ENCODE measurements at regions of chr12 and their contacts with region 1.

Region 1: DNA sequence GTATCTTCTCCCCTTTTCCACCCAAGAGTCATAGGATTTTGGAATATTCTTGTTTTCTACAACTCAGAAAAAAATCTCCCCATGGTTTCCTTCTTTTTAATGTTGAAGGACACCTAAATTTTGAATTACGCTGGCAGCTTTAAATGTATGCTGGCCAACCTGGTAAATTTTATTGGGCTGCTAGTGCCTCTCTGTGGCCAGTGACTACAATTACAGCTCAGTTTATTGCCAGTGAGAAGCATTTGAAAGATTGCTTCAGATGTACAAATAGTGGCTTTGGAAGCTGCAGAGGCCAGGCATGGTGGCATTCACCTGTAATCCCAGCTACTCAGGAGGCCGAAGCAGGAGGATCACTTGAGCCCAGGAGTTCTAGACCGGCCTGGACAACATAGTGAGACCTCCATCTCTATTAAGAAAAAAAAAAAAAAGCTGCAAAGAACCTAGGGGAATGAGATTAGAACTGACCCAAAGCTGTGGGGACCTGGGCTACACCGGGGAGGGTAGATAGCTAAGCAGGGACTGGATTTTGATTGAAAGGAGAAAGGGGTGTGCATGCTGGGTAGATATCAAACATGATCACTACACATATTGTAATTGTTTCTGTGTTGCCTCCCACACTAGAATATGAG is 7.6 kb upstream of the RAB21 start:
- DNase-seq: peak; percentile 12
- H3K4me3 Mint-ChIP-seq: no peak overlapping the region
- H3K27ac Mint-ChIP-seq: no peak overlapping the region
- H3K4me1 Mint-ChIP-seq: no peaks in the 10 kb centered on the region
- H3K27me3 Mint-ChIP-seq: peaks cover 36% of the 10 kb centered on the region

Region 2: DNA sequence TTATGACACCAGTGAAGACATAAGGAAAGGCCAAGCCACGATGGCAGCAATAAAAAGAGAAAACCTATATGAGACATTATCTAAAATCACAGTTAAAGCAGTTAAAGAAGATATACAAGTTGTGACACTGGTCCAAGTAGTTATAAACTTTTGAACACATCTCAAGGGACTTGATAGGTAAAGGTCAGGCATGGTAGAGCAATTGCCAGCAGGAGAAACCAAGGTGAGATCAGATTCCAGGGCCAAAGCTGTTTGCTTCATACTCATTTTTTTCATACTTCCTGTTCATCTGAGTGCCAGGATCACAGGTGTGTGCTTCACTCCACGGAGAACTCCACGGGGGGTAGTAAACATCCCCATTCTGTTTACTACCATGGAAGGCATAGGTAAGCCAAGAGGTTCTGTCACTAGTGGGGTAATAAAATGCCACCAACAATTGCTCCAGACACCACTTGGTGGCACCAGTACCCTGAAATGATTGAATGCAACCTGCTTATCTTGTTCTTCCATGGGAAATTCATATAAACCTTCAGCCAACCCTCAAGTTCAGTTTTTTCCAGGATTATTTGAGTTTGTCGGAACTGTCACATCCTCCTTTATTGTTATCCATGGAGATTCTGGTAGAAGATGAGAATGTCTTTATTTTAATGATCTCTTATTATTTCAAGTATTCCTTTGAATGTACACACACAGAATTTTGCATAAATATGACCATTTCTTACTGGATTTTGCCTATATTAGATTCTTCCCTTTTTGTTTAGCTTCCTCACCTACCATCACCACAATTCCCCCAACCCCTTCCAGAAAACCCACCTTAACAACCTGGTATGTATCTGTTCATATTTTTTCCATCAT is 530.1 kb before region 1 on chr12:
- intact Hi-C with region 1: loop called (anchors 2 kb)
- DNase-seq: no peak
- H3K4me3 Mint-ChIP-seq: no peak overlapping the region
- H3K27ac Mint-ChIP-seq: no peak overlapping the region
- H3K4me1 Mint-ChIP-seq: no peaks in the 10 kb centered on the region
- H3K27me3 Mint-ChIP-seq: no peaks in the 10 kb centered on the region

Region 3: GRCh38 chr12:71354871-71355270 is 392.2 kb before region 1 on chr12:
- intact Hi-C with region 1: no loop called
- DNase-seq: no peak
- H3K4me3 Mint-ChIP-seq: no peak overlapping the region
- H3K27ac Mint-ChIP-seq: no peak overlapping the region
- H3K4me1 Mint-ChIP-seq: no peaks in the 10 kb centered on the region
- H3K27me3 Mint-ChIP-seq: no peaks in the 10 kb centered on the region

Region 4: DNA sequence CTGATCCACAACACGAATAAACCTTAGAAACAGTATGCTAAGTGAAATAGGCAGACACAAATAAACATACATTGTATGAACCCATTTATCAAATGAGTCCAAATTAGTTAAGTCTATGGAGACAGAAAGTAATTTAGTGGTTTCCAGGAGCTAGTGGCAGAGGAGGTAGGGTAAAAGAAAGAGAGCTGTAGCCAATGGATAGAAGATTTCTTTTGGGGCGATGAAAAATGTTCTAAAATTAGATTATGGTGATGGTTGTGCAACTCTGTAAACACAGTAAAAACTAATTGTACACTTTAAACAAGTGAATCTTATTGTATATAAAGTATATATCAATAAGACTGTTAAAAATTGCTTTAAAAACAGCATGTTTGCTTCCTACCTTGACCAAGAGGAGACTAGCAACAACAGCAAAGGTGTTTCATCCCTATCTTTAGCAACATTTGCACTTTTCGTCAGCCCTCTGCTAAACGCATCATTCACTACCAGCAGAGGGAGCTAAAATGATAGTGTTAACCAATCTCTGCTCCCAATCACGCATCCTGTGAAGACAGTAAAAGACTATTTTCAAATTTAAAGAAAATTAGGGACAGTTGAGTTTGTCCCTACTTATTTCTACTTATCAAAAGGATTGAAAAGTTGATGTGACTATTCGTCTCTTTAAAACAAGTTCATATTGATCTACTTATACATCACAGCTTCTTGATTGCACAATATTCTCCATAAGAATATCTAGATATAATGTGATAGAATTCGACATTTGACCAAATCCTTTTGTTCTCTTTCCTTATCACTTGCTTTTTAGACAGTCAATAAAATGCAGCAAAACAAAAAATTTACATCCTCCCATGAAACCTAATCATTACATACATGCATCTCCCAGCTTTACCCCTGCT is 331.5 kb before region 1 on chr12:
- intact Hi-C with region 1: loop called (anchors 1 kb)
- DNase-seq: no peak
- H3K4me3 Mint-ChIP-seq: no peak overlapping the region
- H3K27ac Mint-ChIP-seq: no peak overlapping the region
- H3K4me1 Mint-ChIP-seq: no peaks in the 10 kb centered on the region
- H3K27me3 Mint-ChIP-seq: peaks cover 10% of the 10 kb centered on the region

Region 5: GRCh38 chr12:71469258-71470016 is 277.7 kb before region 1 on chr12:
- intact Hi-C with region 1: no loop called
- DNase-seq: no peak
- H3K4me3 Mint-ChIP-seq: no peak overlapping the region
- H3K27ac Mint-ChIP-seq: no peak overlapping the region
- H3K4me1 Mint-ChIP-seq: no peaks in the 10 kb centered on the region
- H3K27me3 Mint-ChIP-seq: peaks cover 3% of the 10 kb centered on the region

Region 6: DNA sequence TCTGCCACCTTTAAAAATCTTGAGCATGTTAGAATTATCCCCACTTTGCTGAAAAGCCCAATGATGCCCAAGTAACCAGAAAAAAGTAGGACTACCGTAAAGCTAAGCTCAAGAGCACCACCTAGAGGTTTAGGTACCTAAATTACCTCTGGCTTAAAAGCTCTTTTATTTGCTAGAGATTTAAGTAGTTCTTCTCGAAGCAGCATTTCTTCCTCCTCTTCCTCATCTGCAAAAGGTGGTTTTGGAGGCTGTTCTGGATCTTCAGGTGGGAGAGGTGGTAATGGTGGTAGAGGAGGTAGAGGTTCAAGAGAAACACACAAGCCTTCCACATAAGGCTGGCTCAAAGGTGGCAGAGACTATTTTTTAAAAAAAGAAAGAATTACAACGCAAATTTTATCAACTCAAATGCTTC is 110.4 kb before region 1 on chr12:
- intact Hi-C with region 1: loop called (anchors 1 kb)
- DNase-seq: no peak
- H3K4me3 Mint-ChIP-seq: no peak overlapping the region
- H3K27ac Mint-ChIP-seq: peak overlapping the region; percentile 6
- H3K4me1 Mint-ChIP-seq: peaks cover 18% of the 10 kb centered on the region
- H3K27me3 Mint-ChIP-seq: no peaks in the 10 kb centered on the region

Region 7: GRCh38 chr12:73124480-73124879 is 1377.4 kb after region 1 on chr12:
- intact Hi-C with region 1: no loop called
- DNase-seq: no peak
- H3K4me3 Mint-ChIP-seq: no peak overlapping the region
- H3K27ac Mint-ChIP-seq: no peak overlapping the region
- H3K4me1 Mint-ChIP-seq: no peaks in the 10 kb centered on the region
- H3K27me3 Mint-ChIP-seq: no peaks in the 10 kb centered on the region